Activated T-helper 1 cell treated with anti-CD3 and anti-CD28 coated beads, Interleukin-12 subunit alpha, Interleukin-12 subunit beta, Interleukin-2, Interleukin-4 antibody, amounts not matched to agents 30 ng/mL and 10 ng/mL and 1 ng/mL, durations not matched to agents 14 hours and 24 hours and 36 hours (primary cell): ENCODE measurements at regions of chr17 and their contacts with region 1.

Region 1: GRCh38 chr17:16215273-16215964 is at the start of gene NCOR1:
- DNase-seq: peak; percentile 87
- H3K4me3 Mint-ChIP-seq: peak within 1 kb of the TSS; percentile 96
- H3K27ac Mint-ChIP-seq: peak within 1 kb of the TSS; percentile 77
- H3K4me1 Mint-ChIP-seq: peaks cover 27% of the 10 kb centered on the region
- H3K27me3 Mint-ChIP-seq: no peaks in the 10 kb centered on the region
- total RNA-seq, gene NCOR1: 123 and 131 TPM in 2 replicates

Region 2: GRCh38 chr17:16027708-16028584 is 187.5 kb before region 1 on chr17:
- intact Hi-C with region 1: loop called (anchors 1 kb)
- DNase-seq: peak; percentile 33
- H3K4me3 Mint-ChIP-seq: peak overlapping the region; percentile 68
- H3K27ac Mint-ChIP-seq: peak overlapping the region; percentile 91
- H3K4me1 Mint-ChIP-seq: peaks cover 33% of the 10 kb centered on the region
- H3K27me3 Mint-ChIP-seq: no peaks in the 10 kb centered on the region

Region 3: DNA sequence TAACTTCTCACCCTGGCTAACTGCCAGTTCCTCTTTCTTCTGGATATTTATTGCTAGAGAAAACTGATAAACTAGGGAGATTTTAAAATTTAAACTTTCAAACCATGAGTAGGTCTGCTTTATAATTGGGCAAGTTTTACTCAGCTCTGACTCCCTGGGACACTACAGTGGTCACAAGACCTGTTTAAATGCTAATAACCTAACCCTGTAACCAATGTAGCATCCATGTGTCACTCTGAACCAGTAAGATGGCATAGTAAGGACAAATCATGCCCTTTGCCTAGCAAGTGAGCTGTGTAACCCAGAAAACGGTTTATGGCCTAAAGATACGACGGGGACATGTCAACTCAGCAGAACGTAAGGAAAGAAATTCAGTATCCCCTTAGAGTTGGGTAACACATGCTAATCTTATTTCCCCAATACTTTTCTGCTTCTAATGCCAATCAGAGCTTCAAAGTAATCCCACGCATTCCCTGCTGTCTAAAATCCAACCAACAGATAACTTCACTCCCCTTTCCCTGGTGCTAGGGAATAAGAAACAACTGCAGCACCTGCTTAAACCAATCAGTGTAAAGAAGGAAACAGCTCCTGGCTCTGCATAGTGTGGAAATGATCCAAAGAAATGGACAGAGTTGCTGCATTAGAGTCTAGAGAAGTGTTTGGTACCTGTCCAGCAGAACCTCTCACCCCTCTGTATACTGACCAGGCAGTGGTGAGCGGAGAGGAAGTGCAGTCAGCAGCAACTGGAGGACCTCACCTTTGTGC is 85.8 kb before region 1 on chr17:
- intact Hi-C with region 1: no loop called
- DNase-seq: no peak
- H3K4me3 Mint-ChIP-seq: no peak overlapping the region
- H3K27ac Mint-ChIP-seq: no peak overlapping the region
- H3K4me1 Mint-ChIP-seq: peaks cover 5% of the 10 kb centered on the region
- H3K27me3 Mint-ChIP-seq: no peaks in the 10 kb centered on the region

Region 4: GRCh38 chr17:16150251-16150856 is 65.1 kb before region 1 on chr17:
- intact Hi-C with region 1: no loop called
- DNase-seq: no peak
- H3K4me3 Mint-ChIP-seq: no peak overlapping the region
- H3K27ac Mint-ChIP-seq: no peak overlapping the region
- H3K4me1 Mint-ChIP-seq: no peaks in the 10 kb centered on the region
- H3K27me3 Mint-ChIP-seq: no peaks in the 10 kb centered on the region

Region 5: GRCh38 chr17:16171616-16172015 is 43.8 kb before region 1 on chr17:
- intact Hi-C with region 1: loop called (anchors 5 kb)
- DNase-seq: no peak
- H3K4me3 Mint-ChIP-seq: no peak overlapping the region
- H3K27ac Mint-ChIP-seq: no peak overlapping the region
- H3K4me1 Mint-ChIP-seq: peaks cover 6% of the 10 kb centered on the region
- H3K27me3 Mint-ChIP-seq: no peaks in the 10 kb centered on the region

Region 6: GRCh38 chr17:16232391-16232790 is 17.0 kb after region 1 on chr17:
- intact Hi-C with region 1: loop called (anchors 1 kb)
- DNase-seq: no peak
- H3K4me3 Mint-ChIP-seq: no peak overlapping the region
- H3K27ac Mint-ChIP-seq: no peak overlapping the region
- H3K4me1 Mint-ChIP-seq: peaks cover 21% of the 10 kb centered on the region
- H3K27me3 Mint-ChIP-seq: no peaks in the 10 kb centered on the region

Region 7: GRCh38 chr17:16285957-16286640 is 70.7 kb after region 1 on chr17:
- intact Hi-C with region 1: loop called (anchors 1 kb)
- DNase-seq: peak; percentile 75
- H3K4me3 Mint-ChIP-seq: peak overlapping the region; percentile 73
- H3K27ac Mint-ChIP-seq: peak overlapping the region; percentile 99
- H3K4me1 Mint-ChIP-seq: peaks cover 48% of the 10 kb centered on the region
- H3K27me3 Mint-ChIP-seq: no peaks in the 10 kb centered on the region

Region 8: GRCh38 chr17:16353317-16354174 is 138.1 kb after region 1 on chr17 and contains the start of gene CENPV:
- intact Hi-C with region 1: loop called (anchors 5 kb)
- DNase-seq: peak; percentile 49
- H3K4me3 Mint-ChIP-seq: peak within 1 kb of the TSS; percentile 95
- H3K27ac Mint-ChIP-seq: peak within 1 kb of the TSS; percentile 77
- H3K4me1 Mint-ChIP-seq: peaks cover 16% of the 10 kb centered on the region
- H3K27me3 Mint-ChIP-seq: peaks cover 22% of the 10 kb centered on the region
- total RNA-seq, gene CENPV: 47.1 and 54.7 TPM in 2 replicates

Region 9: GRCh38 chr17:16537130-16537458 is 321.7 kb after region 1 on chr17:
- intact Hi-C with region 1: loop called (anchors 5 kb)
- DNase-seq: no peak
- H3K4me3 Mint-ChIP-seq: peak overlapping the region; percentile 91
- H3K27ac Mint-ChIP-seq: peak overlapping the region; percentile 52
- H3K4me1 Mint-ChIP-seq: peaks cover 16% of the 10 kb centered on the region
- H3K27me3 Mint-ChIP-seq: no peaks in the 10 kb centered on the region